OCI-LY7 (cell line): ENCODE measurements at regions of chr2 and their contacts with region 1.

Region 1: DNA sequence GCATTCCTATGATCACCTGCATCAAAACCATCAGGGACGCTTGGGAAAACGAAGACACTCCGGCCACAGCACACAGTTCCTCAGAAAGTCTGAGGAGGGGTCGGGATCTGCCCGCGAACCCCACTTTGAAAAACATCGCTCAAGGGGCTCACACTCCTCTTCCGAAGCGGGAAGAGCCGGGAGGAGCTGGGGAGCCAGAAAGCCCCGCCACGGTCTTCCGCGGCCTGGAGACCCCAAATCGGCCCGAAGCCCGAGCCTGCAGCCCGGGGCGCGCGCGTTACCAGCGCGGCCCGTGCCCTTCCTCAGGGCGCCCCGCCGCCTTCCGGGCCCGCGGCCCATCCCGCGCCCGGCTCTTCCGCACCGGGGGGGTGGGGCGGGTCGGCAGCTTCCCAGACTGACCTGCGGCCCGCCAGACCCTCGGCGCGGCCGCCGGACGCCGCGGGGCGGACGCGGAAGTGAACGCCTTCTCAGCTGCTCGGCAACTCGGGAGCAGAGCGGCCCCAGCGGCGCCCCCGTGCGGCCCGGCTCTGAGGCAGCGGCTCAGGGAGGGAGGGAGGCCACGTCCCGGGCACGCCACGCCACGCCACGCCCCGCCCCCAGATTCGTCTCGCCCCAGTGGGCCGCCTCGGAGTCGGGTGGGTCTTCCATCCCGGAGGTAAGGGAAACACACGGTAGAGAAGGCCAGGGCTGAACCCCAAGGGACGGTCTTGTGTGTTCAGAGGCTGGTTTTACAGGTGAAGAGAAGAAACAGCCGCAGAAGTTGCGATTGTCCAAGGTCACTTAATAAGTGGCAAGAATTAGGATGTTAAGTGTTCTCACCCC is at the start of gene KCTD18:
- DNase-seq: peak; percentile 93
- H3K4me3 ChIP-seq: peak within 1 kb of the TSS; percentile 78
- H3K27ac ChIP-seq: peak within 1 kb of the TSS; percentile 16
- H3K4me1 ChIP-seq: peaks cover 24% of the 10 kb centered on the region
- CTCF ChIP-seq: peak; percentile 80
- total RNA-seq, gene KCTD18: 10.9 and 12.7 TPM in 2 replicates

Region 2: GRCh38 chr2:200525882-200526651 is 16.2 kb after region 1 on chr2 and contains the start of gene SGO2:
- CTCF ChIA-PET with region 1: interaction called, 3 read pairs
- POLR2A ChIA-PET with region 1: interaction called, 98 read pairs
- intact Hi-C with region 1: loop called (anchors 1 kb)
- DNase-seq: peak; percentile 97
- H3K4me3 ChIP-seq: peak within 1 kb of the TSS; percentile 91
- H3K27ac ChIP-seq: peak within 1 kb of the TSS; percentile 67
- H3K4me1 ChIP-seq: peaks cover 28% of the 10 kb centered on the region
- CTCF ChIP-seq: no peak
- total RNA-seq, gene SGO2: 24.6 and 29.3 TPM in 2 replicates

Region 3: GRCh38 chr2:200888704-200889625 is 379.1 kb after region 1 on chr2 and contains the starts of genes NIF3L1 and PPIL3:
- CTCF ChIA-PET with region 1: no interaction called
- POLR2A ChIA-PET with region 1: no interaction called
- intact Hi-C with region 1: loop called (anchors 10 kb)
- DNase-seq: peak; percentile 99
- H3K4me3 ChIP-seq: peak within 1 kb of the TSS; percentile 90
- H3K27ac ChIP-seq: peak within 1 kb of the TSS; percentile 98
- H3K4me1 ChIP-seq: peaks cover 52% of the 10 kb centered on the region
- CTCF ChIP-seq: peak; percentile 39; the same call in 1 of the 2 replicates
- total RNA-seq, gene NIF3L1: 37.5 and 68.4 TPM in 2 replicates
- total RNA-seq, gene PPIL3: 49.4 and 54.4 TPM in 2 replicates